Thyroid gland (tissue), 4 donors: ENCODE measurements at regions of chr7 and their contacts with region 1.

Region 1: DNA sequence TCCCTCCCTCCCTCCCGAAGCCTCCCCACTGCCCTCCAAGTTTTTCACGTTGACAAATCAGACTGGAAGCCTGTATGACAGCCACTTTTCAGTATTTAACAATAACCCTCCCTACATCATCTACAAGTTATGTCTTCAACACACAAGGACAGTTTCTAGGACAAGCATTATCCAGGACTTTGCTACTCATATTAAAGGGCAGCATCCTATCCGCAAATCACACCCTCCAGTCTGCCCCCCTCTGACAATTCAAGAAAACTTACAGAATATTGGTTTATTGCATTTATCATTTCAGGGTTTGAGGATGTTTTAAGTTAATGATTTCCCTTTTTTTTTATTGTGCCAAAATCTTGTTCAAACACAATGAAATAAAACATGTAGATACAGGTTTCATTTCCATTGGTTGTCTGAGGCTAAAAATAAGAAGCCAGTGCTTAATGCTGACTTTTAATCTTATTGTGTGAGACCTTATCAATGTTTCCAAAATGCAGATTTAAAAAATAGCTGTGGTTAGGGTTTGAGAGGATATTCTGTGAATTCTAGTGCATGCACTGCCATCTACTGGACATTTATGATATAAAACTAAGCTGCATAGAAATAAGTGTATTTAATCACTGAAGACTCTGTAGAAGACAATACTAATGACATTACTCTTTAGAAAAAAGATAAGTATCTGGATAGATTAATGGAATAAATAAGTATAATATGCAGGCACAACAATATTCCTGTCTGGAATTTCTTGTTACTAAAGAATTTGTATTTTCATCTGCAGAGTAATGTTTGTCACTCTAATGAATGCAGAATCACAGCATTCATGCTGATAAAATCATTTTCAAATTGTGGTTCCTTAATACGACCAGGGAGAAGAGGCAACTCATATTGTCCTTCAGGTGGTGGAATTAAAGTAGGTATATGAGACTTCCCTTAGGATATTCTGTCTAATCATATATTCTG is 64.1 kb downstream of the CAV1 start:
- DNase-seq: no peak
- H3K4me3 ChIP-seq: no peak overlapping the region
- H3K27ac ChIP-seq: peak overlapping the region in 1 of 3 donors; percentile 10
- H3K4me1 ChIP-seq: peaks cover 31 to 37% of the 10 kb centered on the region in 2 donors
- H3K27me3 ChIP-seq: no peaks in the 10 kb centered on the region
- CTCF ChIP-seq: peak; percentile 11 to 92 (median 61)
- POLR2A ChIP-seq: no peak

Region 2: GRCh38 chr7:116258734-116259133 is 330.2 kb before region 1 on chr7:
- intact Hi-C with region 1: loop called (anchors 5 kb)
- DNase-seq: peak in 1 of 2 donors; percentile 27
- H3K4me3 ChIP-seq: no peak overlapping the region
- H3K27ac ChIP-seq: peak overlapping the region; percentile 37 to 79 (median 64)
- H3K4me1 ChIP-seq: peaks cover 18 to 24% of the 10 kb centered on the region in 2 donors
- H3K27me3 ChIP-seq: no peaks in the 10 kb centered on the region
- CTCF ChIP-seq: peak; percentile 50 to 95 (median 80)
- POLR2A ChIP-seq: no peak